ENCODE measurements at regions of chr7 and their contacts with region 1.

Region 1: DNA sequence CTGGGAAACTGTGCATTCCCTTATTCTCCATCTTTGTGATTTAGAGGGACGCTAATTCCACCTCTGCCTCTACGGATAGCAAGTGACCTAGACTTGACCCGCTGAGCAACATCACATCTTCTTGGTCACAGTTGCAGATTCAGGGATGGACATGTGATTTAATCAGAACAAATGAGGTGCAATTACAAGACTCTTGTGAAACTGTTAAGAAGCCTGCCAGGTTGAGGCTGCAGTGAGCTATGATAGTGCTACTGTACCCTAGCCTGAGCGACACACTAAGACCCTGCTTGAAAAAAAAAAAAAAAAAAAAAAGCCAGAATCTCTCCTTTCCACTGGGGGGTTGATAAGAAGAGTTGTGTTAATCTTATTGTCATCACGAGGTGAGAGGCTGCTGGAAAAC is 14.4 kb downstream of the MPLKIP start:
- DNase-seq: no peak
- H3K4me3 Mint-ChIP-seq: no peak overlapping the region
- H3K27ac Mint-ChIP-seq: no peak overlapping the region
- H3K4me1 Mint-ChIP-seq: no peaks in the 10 kb centered on the region
- H3K27me3 Mint-ChIP-seq: no peaks in the 10 kb centered on the region

Region 2: GRCh38 chr7:40047661-40048060 is 72.4 kb before region 1 on chr7:
- CTCF ChIA-PET with region 1: no interaction called
- POLR2A ChIA-PET with region 1: no interaction called
- DNase-seq: no peak
- H3K4me3 Mint-ChIP-seq: no peak overlapping the region
- H3K27ac Mint-ChIP-seq: no peak overlapping the region
- H3K4me1 Mint-ChIP-seq: peaks cover 6% of the 10 kb centered on the region
- H3K27me3 Mint-ChIP-seq: no peaks in the 10 kb centered on the region

Region 3: DNA sequence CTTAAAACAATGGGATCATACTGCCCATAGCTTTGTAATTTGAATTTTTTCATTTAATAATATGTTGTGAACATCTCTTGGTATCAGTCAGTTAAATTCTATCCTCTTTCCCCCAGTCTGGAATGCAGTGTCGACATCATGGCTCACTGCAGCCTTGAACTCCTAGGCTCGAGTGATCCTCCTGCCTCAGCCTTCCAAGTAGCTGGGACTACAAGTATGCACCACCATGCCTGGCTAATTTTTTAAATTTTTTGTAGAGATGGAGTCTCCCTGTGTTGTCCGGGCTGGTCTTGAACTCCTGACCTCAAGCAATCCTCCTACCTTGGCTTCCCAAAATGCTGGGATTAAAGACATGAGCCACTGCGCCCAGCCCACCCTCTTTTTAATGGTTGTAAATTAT is 20.2 kb before region 1 on chr7:
- CTCF ChIA-PET with region 1: no interaction called
- POLR2A ChIA-PET with region 1: no interaction called
- DNase-seq: no peak
- H3K4me3 Mint-ChIP-seq: no peak overlapping the region
- H3K27ac Mint-ChIP-seq: no peak overlapping the region
- H3K4me1 Mint-ChIP-seq: no peaks in the 10 kb centered on the region
- H3K27me3 Mint-ChIP-seq: no peaks in the 10 kb centered on the region

Region 4: DNA sequence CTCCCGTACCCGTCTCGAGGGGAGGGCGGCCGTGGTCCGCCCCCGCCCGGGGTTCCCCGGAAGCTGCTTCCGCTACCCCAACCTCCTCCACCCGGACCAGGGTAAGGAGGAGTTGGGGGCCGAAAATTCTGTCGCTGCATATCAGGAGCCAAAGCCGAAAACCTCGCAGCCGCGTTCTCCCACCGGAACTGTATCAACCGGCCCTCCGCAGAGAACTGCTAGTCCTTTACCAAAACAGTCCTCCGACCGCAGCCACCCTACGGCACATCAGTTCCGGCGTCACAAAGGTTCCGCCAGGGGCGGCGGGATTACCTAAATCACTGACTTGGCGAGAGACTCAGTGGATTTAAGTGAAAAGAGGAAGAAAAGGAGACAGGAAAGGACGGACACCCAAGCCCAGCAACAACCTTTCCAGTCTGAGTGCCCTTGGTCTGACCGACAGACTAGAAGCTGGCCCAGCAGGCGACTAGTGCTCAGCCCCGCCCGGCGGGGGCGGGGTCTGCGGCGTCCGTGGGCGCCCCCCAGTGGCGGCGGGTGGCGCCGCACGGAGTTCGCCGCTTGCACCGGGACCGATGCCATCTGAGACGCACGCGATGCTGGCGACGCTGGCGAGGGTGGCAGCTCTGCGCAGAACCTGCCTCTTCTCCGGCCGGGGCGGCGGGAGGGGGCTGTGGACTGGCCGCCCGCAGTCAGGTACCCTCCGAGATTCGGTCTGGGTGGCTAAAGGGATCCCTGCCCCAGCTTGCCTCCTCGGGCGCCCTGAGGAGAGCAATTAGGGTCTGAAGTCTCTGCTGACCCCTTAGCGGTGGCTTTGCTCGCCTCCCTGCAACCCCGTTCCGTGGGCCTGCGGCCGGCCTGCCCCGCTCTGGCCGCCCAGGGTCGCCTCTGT is 14.7 kb after region 1 on chr7 and contains the starts of genes MPLKIP and SUGCT:
- CTCF ChIA-PET with region 1: interaction called, 12 read pairs
- POLR2A ChIA-PET with region 1: no interaction called
- DNase-seq: peak; percentile 88
- H3K4me3 Mint-ChIP-seq: peak within 1 kb of the TSS; percentile 95
- H3K27ac Mint-ChIP-seq: peak within 1 kb of the TSS; percentile 96
- H3K4me1 Mint-ChIP-seq: peaks cover 19% of the 10 kb centered on the region
- H3K27me3 Mint-ChIP-seq: peaks cover 3% of the 10 kb centered on the region
- total RNA-seq, gene MPLKIP: 30.9 to 38.4 TPM
- total RNA-seq, gene SUGCT: not detected

Region 5: GRCh38 chr7:40329601-40330153 is 209.7 kb after region 1 on chr7:
- CTCF ChIA-PET with region 1: no interaction called
- POLR2A ChIA-PET with region 1: no interaction called
- DNase-seq: no peak
- H3K4me3 Mint-ChIP-seq: no peak overlapping the region
- H3K27ac Mint-ChIP-seq: no peak overlapping the region
- H3K4me1 Mint-ChIP-seq: no peaks in the 10 kb centered on the region
- H3K27me3 Mint-ChIP-seq: no peaks in the 10 kb centered on the region

Measured in activated CD4-positive, alpha-beta T cell treated with anti-CD3 and anti-CD28 coated beads, Interleukin-2, amount 10 ng/mL, durations not matched to agents 7 days and 5 days (primary cell).